T-cell (primary cell): ENCODE measurements at regions of chr18 and their contacts with region 1.

Region 1: DNA sequence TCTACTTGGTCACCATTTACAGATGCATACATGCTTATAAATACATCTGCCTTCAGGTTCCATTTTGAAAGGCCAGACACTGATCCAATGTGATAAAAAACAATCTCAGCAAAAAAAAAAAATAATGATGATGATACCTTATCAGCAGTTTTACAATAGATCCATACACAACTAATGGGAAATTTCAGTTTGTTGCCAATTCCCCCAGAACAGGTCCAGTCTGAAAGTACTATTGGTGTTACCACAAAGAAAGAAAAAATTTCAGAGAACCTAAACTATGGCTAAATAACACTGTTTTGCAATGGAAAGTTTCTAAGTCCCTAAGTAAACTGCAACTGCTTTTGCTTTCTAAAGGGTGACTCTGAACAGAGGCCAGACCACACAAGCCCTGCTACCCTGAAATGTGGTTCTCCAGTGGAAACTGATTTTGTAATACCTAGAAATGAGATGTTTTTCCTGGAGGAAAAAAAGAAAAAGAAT is 54.1 kb downstream of the LPIN2 start:
- DNase-seq: peak in 1 of 35 experiments; percentile 53
- ATAC-seq: peak in 1 of 4 experiments; percentile 18
- H3K4me3 ChIP-seq: no peak overlapping the region
- H3K4me3 Mint-ChIP-seq: peak overlapping the region; percentile 46 to 72 (median 62)
- H3K27ac ChIP-seq: peak overlapping the region; percentile 94
- H3K27ac Mint-ChIP-seq: peak overlapping the region; percentile 95
- H3K4me1 ChIP-seq: peaks cover 67 to 77% of the 10 kb centered on the region in 2 experiments
- H3K4me1 Mint-ChIP-seq: peaks cover 91 to 95% (median 94%) of the 10 kb centered on the region in 3 donors
- H3K27me3 ChIP-seq: no peaks in the 10 kb centered on the region
- H3K27me3 Mint-ChIP-seq: no peaks in the 10 kb centered on the region

Region 2: DNA sequence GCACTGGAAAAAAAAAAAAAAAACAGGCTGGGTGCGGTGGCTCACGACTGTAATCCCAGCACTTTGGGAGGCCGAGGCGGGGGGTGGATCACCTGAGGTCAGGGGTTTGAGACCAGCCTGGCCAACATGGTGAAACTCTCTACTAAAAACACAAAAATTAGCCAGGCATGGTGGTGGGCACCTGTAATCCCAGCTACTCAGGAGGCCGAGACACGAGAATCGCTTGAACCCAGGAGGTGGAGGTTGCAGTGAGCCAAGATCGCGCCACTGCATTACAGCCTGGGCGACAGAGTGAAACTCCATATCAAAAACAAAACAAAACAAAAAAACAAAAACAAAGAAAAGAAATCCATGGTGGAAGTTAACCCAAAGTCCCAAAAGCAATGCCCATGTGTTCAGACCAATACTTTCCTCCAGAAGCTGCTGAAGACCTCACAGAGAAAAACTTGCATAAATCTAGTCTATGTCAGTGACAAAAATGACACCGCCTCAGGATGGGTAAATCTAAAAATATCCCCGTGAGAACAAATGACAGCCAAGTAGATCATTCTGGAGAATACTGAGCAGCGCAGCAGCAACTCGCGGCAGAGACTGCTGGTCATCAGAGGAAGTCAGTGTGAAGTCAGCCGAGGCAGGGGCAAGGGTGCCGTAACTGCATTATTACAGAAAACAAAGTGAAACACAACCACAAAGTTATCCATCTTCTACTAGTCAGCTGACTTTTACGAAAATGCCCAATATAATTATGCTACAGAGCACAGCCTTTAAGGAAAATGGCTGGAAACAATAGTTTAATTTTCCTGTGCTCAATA is 13.1 kb after region 1 on chr18:
- CTCF ChIA-PET with region 1: interaction called in 1 of 2 experiments, 51 read pairs
- POLR2A ChIA-PET with region 1: interaction called, 4 to 21 read pairs
- DNase-seq: peak in 33 of 35 experiments; percentile 44 to 82 (median 69)
- ATAC-seq: peak; percentile 53 to 72 (median 65)
- H3K4me3 ChIP-seq: peak overlapping the region; percentile 35
- H3K4me3 Mint-ChIP-seq: peak overlapping the region; percentile 75 to 89 (median 86)
- H3K27ac ChIP-seq: peak overlapping the region; percentile 94
- H3K27ac Mint-ChIP-seq: peak overlapping the region; percentile 95 to 96
- H3K4me1 ChIP-seq: peaks cover 56 to 70% of the 10 kb centered on the region in 2 experiments
- H3K4me1 Mint-ChIP-seq: peaks cover 94 to 97% (median 95%) of the 10 kb centered on the region in 3 donors
- H3K27me3 ChIP-seq: no peaks in the 10 kb centered on the region
- H3K27me3 Mint-ChIP-seq: no peaks in the 10 kb centered on the region

Region 3: DNA sequence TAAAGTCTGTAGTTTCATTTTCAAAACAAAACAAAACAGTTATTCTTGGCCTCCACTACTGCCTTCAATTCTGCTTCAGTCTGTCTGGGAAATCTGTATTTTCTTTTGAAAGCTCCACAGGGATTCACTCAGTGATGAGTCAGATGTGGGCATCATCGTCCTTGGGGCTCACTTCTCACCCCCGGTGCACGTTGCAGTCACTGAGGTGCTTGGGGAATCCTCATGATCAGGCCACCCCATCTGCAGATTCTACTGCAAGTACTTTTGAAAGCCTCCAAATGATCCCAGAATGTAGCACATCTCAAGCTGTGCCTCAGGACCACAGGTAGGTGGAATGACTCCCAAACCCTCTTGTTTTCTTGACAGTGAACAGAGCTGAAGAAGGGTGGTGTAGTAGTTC is 19.8 kb after region 1 on chr18:
- CTCF ChIA-PET with region 1: interaction called, 4 to 197 read pairs
- POLR2A ChIA-PET with region 1: interaction called, 4 to 10 read pairs
- DNase-seq: peak in 1 of 35 experiments; percentile 54
- ATAC-seq: peak; percentile 12 to 21 (median 14)
- H3K4me3 ChIP-seq: peak overlapping the region in 1 of 2 donors; percentile 32
- H3K4me3 Mint-ChIP-seq: peak overlapping the region; percentile 76 to 87 (median 79)
- H3K27ac ChIP-seq: peak overlapping the region; percentile 83
- H3K27ac Mint-ChIP-seq: peak overlapping the region; percentile 97 to 99
- H3K4me1 ChIP-seq: peaks cover 45 to 58% of the 10 kb centered on the region in 2 experiments
- H3K4me1 Mint-ChIP-seq: peaks cover 82 to 93% (median 86%) of the 10 kb centered on the region in 3 donors
- H3K27me3 ChIP-seq: no peaks in the 10 kb centered on the region
- H3K27me3 Mint-ChIP-seq: no peaks in the 10 kb centered on the region